CD4-positive, alpha-beta memory T cell (primary cell): ENCODE measurements at regions of chr18 and their contacts with region 1.

Region 1: DNA sequence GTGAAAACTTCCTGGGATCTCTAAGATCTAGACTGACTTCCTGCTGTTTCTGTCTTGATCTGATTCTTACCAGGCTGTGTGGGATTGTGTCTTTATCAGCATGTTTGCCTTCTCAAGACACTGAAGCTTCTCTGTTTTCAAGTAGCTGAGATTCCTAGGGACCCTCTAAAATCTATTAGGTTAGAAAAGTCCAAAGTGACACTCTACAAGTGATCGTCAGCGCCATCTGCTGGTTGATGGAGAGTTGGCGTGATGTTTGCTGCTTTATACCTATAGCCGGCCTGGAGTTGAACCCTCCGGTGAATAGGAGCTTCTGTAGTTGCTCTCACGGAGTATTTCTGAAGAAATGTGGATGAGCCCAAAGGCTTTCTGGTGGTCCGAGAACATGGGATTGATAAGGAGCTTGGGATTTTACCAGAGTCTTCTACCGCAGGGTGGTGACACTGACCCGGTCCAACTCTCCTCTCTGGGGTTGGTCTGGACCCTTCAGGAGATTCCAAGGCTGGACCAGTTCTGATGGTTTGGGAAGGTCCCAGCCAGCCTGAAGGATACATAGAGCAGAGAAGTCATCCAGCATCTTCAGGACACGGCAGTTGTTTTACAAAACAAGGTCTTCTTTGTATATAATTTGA is 96.0 kb upstream of the TTC39C start:
- DNase-seq: peak; percentile 60 to 76 (median 68)
- H3K4me3 ChIP-seq: no peak overlapping the region
- H3K4me3 Mint-ChIP-seq: peak overlapping the region in 3 of 8 donors; percentile 21 to 41 (median 37)
- H3K27ac ChIP-seq: no peak overlapping the region
- H3K27ac Mint-ChIP-seq: peak overlapping the region in 5 of 7 donors; percentile 19 to 69 (median 26)
- H3K4me1 ChIP-seq: peaks cover 21% of the 10 kb centered on the region
- H3K4me1 Mint-ChIP-seq: peaks cover 23 to 29% (median 24%) of the 10 kb centered on the region in 4 donors
- H3K27me3 ChIP-seq: no peaks in the 10 kb centered on the region
- H3K27me3 Mint-ChIP-seq: no peaks in the 10 kb centered on the region

Region 2: DNA sequence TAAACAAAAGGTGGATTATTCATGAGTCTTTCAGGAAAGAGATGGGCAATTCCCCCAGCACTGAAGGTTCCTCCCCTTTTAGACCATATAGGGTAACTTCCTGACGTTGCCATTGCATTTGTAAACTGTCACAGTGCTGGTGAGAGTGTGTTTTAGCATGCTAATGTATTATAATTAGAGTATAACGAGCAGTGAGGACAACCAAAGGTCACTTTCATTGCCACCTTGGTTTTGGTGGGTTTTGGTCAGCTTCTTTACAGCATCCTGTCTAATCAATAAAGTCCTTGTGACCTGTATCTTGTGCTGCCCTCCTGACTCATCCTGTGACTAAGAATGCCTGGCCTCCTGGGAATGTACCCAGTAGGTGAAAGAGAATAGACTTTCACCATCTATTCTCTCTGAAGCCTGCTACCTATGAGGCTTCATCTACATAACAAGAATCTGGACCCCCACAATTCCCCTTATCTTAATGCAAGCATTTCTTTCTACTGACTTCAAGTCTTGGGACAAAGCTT is 634.5 kb before region 1 on chr18:
- CTCF ChIA-PET with region 1: no interaction called
- POLR2A ChIA-PET with region 1: no interaction called
- intact Hi-C with region 1: no loop called
- DNase-seq: no peak
- H3K4me3 ChIP-seq: no peak overlapping the region
- H3K4me3 Mint-ChIP-seq: no peak overlapping the region
- H3K27ac ChIP-seq: no peak overlapping the region
- H3K27ac Mint-ChIP-seq: no peak overlapping the region
- H3K4me1 ChIP-seq: no peaks in the 10 kb centered on the region
- H3K4me1 Mint-ChIP-seq: no peaks in the 10 kb centered on the region
- H3K27me3 ChIP-seq: no peaks in the 10 kb centered on the region
- H3K27me3 Mint-ChIP-seq: no peaks in the 10 kb centered on the region

Region 3: DNA sequence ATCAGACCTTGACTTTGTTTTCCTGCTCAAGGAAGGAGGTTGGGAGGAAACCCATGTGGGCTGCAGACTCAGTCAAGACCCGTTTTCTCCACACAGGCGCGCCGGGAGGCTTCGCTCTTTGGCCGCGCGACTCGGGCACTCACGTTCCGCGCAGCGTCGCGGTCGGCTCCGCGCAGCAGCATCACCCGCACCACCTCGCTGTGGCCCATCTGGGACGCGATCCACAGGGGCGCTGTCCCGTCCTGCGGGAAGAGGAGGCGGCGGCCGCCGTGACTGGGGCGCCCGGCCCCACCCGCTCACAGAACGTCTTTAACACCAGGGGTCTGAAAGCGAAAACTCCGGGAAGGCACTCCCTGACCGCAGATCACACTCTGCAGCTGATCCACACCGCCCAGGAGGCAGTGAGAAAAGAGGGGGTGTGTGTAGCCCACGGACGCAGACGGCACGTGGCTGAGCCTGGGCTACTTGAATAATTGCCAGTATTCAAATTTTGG is 299.1 kb before region 1 on chr18:
- CTCF ChIA-PET with region 1: interaction called, 19 read pairs
- POLR2A ChIA-PET with region 1: no interaction called
- intact Hi-C with region 1: loop called (anchors 1 kb)
- DNase-seq: peak in 3 of 5 donors; percentile 5 to 6 (median 5)
- H3K4me3 ChIP-seq: peak overlapping the region in 1 of 2 donors; percentile 3
- H3K4me3 Mint-ChIP-seq: peak overlapping the region; percentile 46 to 81 (median 70)
- H3K27ac ChIP-seq: no peak overlapping the region
- H3K27ac Mint-ChIP-seq: peak overlapping the region in 1 of 7 donors; percentile 1
- H3K4me1 ChIP-seq: peaks cover 11% of the 10 kb centered on the region
- H3K4me1 Mint-ChIP-seq: peaks cover 0 to 7% (median 3%) of the 10 kb centered on the region in 4 donors
- H3K27me3 ChIP-seq: peaks cover 31% of the 10 kb centered on the region
- H3K27me3 Mint-ChIP-seq: peaks cover 34 to 36% of the 10 kb centered on the region in 2 donors

Region 4: GRCh38 chr18:23828426-23828825 is 90.1 kb before region 1 on chr18:
- CTCF ChIA-PET with region 1: interaction called, 26 read pairs
- POLR2A ChIA-PET with region 1: no interaction called
- intact Hi-C with region 1: loop called (anchors 1 kb)
- DNase-seq: peak; percentile 68 to 87 (median 83)
- H3K4me3 ChIP-seq: no peak overlapping the region
- H3K4me3 Mint-ChIP-seq: peak overlapping the region in 1 of 8 donors; percentile 57
- H3K27ac ChIP-seq: peak overlapping the region; percentile 48
- H3K27ac Mint-ChIP-seq: peak overlapping the region in 6 of 7 donors; percentile 80 to 96 (median 92)
- H3K4me1 ChIP-seq: peaks cover 15% of the 10 kb centered on the region
- H3K4me1 Mint-ChIP-seq: peaks cover 15 to 36% (median 19%) of the 10 kb centered on the region in 4 donors
- H3K27me3 ChIP-seq: no peaks in the 10 kb centered on the region
- H3K27me3 Mint-ChIP-seq: no peaks in the 10 kb centered on the region

Region 5: DNA sequence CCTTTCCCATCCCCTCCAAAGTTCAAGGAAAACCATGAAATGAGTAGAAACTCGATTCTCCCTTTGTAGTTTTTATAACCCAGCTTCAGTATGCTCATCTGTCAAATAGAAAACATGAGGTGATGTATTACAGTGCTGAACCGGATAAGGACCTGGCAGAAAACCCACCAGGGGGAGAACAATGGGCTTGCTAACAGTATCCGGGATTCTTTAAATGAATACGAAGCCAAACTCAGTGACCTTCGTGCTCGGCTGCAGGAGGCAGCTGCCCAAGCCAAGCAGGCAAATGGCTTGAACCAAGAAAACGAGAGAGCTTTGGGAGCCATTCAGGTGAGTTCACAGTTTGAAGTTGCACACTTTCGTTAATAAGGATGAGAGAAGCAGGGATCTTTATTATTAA is 17.5 kb before region 1 on chr18:
- CTCF ChIA-PET with region 1: interaction called, 15 read pairs
- POLR2A ChIA-PET with region 1: no interaction called
- intact Hi-C with region 1: no loop called
- DNase-seq: no peak
- H3K4me3 ChIP-seq: no peak overlapping the region
- H3K4me3 Mint-ChIP-seq: no peak overlapping the region
- H3K27ac ChIP-seq: no peak overlapping the region
- H3K27ac Mint-ChIP-seq: no peak overlapping the region
- H3K4me1 ChIP-seq: no peaks in the 10 kb centered on the region
- H3K4me1 Mint-ChIP-seq: no peaks in the 10 kb centered on the region
- H3K27me3 ChIP-seq: no peaks in the 10 kb centered on the region
- H3K27me3 Mint-ChIP-seq: peaks cover 0 to 2% of the 10 kb centered on the region in 2 donors

Region 6: DNA sequence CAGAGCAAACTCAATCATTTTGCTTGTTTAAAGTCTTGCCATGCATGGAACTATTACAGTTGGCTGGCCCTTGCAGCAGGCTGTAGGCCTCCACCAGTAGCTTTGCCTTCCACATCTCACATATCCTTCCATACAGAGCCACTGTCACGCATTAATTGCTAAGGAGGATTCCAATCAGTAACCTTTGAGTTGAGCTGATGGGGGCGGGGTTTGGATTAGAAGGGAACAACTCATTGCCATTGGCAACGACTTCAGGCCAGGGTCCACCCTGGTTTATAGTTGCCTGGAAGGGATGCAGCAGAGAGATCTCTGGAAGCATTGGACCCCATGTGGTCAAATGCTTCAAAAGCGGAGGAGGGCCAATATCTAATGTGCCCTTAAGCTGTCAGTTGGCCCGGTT is 32.7 kb after region 1 on chr18:
- CTCF ChIA-PET with region 1: interaction called, 30 read pairs
- POLR2A ChIA-PET with region 1: no interaction called
- intact Hi-C with region 1: no loop called
- DNase-seq: no peak
- H3K4me3 ChIP-seq: no peak overlapping the region
- H3K4me3 Mint-ChIP-seq: no peak overlapping the region
- H3K27ac ChIP-seq: no peak overlapping the region
- H3K27ac Mint-ChIP-seq: peak overlapping the region in 1 of 7 donors; percentile 50
- H3K4me1 ChIP-seq: no peaks in the 10 kb centered on the region
- H3K4me1 Mint-ChIP-seq: peaks cover 0 to 5% (median 0%) of the 10 kb centered on the region in 4 donors
- H3K27me3 ChIP-seq: no peaks in the 10 kb centered on the region
- H3K27me3 Mint-ChIP-seq: no peaks in the 10 kb centered on the region

Region 7: DNA sequence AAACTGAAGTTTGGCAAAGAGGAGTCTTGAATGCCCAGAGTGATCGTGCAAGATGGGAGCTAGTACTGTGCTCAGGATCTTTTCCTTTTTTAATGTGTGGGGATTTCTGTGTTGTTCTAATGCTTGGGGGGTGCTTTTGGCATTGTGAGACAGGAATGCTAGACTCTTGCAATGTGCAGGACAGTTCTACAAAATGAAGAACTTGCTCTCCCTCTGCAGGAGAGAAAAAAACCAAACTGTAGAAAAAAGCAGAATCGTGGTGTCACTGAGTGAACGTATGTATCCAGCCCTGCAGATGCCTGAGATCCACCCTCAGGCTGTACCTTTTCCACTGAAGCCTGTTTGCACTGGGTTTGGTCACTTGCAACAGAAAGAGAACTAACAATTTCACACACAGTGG is 84.0 kb after region 1 on chr18:
- CTCF ChIA-PET with region 1: interaction called, 39 read pairs
- POLR2A ChIA-PET with region 1: interaction called, 3 read pairs
- intact Hi-C with region 1: loop called (anchors 2 kb)
- DNase-seq: no peak
- H3K4me3 ChIP-seq: no peak overlapping the region
- H3K4me3 Mint-ChIP-seq: peak overlapping the region in 7 of 8 donors; percentile 37 to 80 (median 68)
- H3K27ac ChIP-seq: peak overlapping the region; percentile 74
- H3K27ac Mint-ChIP-seq: peak overlapping the region; percentile 86 to 99 (median 91)
- H3K4me1 ChIP-seq: peaks cover 98% of the 10 kb centered on the region
- H3K4me1 Mint-ChIP-seq: peaks cover 60 to 87% (median 72%) of the 10 kb centered on the region in 4 donors
- H3K27me3 ChIP-seq: no peaks in the 10 kb centered on the region
- H3K27me3 Mint-ChIP-seq: no peaks in the 10 kb centered on the region

Region 8: GRCh38 chr18:24118750-24119577 is 200.4 kb after region 1 on chr18:
- CTCF ChIA-PET with region 1: interaction called, 14 read pairs
- POLR2A ChIA-PET with region 1: no interaction called
- intact Hi-C with region 1: loop called (anchors 1 kb)
- DNase-seq: peak; percentile 72 to 78 (median 76)
- H3K4me3 ChIP-seq: no peak overlapping the region
- H3K4me3 Mint-ChIP-seq: no peak overlapping the region
- H3K27ac ChIP-seq: no peak overlapping the region
- H3K27ac Mint-ChIP-seq: peak overlapping the region; percentile 37 to 79 (median 50)
- H3K4me1 ChIP-seq: peaks cover 16% of the 10 kb centered on the region
- H3K4me1 Mint-ChIP-seq: peaks cover 16 to 31% (median 23%) of the 10 kb centered on the region in 4 donors
- H3K27me3 ChIP-seq: no peaks in the 10 kb centered on the region
- H3K27me3 Mint-ChIP-seq: no peaks in the 10 kb centered on the region